Heart right ventricle (tissue), 16 donors: ENCODE measurements at regions of chr18 and their contacts with region 1.

Region 1: DNA sequence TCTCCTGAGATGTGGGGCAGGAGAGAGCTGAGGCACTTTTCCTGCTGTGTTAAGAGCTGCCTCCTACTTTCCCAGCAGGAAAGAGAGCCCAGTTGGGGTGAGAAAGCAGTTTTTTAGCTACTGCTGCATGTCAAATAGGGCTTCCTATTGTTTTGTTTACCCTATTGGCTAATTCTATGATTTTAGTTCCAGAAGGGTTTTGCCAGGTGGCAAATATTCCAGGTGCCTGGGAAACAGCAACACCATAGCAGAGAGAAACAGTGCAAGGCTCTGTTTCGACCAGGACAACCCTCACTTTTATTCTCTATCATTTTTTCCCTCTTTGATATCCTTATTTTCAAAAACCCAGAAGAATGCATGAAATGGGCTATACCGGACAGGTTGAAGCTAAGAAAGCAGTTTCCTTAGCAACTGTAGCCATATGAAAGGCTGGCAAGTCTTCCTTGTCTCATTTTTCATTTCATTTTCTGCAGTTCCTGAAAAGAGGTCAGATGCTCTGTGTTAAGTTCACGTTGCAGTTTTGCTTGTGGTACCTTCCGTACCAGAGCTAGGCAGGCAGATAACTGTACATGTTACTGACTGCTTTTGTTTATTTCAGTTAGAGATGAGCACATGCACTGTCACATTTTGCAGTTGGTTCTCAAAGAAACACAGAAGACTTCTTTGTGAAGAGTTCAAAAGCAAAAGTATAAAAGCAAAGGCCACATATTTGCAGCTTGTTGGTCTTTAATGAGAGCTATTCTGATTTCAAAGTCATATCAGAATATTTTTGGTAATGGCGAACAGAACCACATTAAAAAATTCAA is 84.8 kb downstream of the AQP4 start:
- DNase-seq: no peak
- ATAC-seq: no peak
- H3K4me3 ChIP-seq: no peak overlapping the region
- H3K27ac ChIP-seq: no peak overlapping the region
- H3K4me1 ChIP-seq: no peaks in the 10 kb centered on the region
- H3K27me3 ChIP-seq: peaks cover 0 to 37% (median 10%) of the 10 kb centered on the region in 7 donors
- CTCF ChIP-seq: no peak

Region 2: DNA sequence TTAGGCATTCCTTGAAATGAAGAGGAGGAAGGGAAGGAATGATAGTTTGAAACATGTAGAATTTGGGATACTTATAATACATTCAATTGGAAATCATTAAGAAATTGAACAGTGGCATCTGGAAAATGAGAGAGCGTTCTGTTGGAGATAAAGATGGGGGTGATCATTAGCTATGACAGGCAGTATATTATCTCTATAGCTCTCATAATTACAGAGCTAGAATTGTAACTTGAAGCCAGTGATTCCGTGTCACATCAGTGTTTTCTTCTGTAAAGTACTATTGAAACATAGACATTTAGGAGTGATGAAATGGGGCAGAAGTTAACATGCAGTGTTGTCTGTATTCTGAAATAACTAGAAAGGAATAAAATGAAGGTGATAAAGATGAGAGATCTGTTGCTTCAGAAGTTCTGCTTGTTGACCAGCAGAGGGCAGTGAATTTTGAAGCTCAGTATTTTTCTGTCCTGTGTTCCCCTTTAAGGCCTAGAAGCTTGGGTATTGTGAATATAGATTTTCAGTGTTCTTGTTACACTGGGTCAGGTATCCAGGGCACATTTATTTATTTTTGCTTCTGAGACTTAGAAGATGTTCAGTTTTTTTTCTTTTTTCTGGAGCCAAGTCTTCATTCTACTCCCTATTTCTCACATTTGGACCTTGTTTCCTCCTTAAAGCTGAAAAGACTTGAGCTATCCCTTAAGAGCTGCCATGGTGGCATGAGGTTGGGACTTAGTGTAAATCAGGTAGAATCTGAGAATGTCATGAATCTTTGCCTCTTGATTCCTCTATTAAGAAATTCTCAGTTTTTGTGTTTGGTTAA is 397.1 kb before region 1 on chr18:
- intact Hi-C with region 1: no loop called
- DNase-seq: no peak
- ATAC-seq: peak in 3 of 8 donors; percentile 47 to 56 (median 49)
- H3K4me3 ChIP-seq: no peak overlapping the region
- H3K27ac ChIP-seq: no peak overlapping the region
- H3K4me1 ChIP-seq: peaks cover 0 to 21% (median 10%) of the 10 kb centered on the region in 9 donors
- H3K27me3 ChIP-seq: no peaks in the 10 kb centered on the region
- CTCF ChIP-seq: peak; percentile 58 to 85 (median 77)

Region 3: GRCh38 chr18:26662996-26663395 is 117.7 kb before region 1 on chr18:
- intact Hi-C with region 1: no loop called
- DNase-seq: no peak
- ATAC-seq: no peak
- H3K4me3 ChIP-seq: no peak overlapping the region
- H3K27ac ChIP-seq: no peak overlapping the region
- H3K4me1 ChIP-seq: peaks cover 0 to 5% (median 3%) of the 10 kb centered on the region in 9 donors
- H3K27me3 ChIP-seq: peaks cover 0 to 51% (median 23%) of the 10 kb centered on the region in 7 donors
- CTCF ChIP-seq: no peak

Region 4: DNA sequence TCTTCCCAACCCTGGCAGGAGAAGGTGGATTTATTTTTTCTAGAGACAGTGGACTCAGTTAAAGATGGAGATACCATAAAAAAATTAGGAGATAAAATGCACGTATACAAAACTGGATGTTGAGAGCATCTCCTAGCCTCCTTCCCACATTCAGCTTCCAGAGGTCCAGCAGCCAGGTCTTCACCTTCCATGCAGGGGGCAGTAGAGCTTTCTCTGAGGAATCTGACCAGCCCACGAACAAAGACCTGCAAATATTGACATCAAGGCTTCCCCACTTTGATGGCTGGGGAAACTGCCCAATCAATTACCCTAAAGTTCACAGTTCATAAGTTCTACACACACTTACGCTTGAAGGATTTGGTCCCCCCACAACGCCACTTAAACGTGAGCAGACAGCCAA is 60.2 kb after region 1 on chr18:
- intact Hi-C with region 1: loop called in 1 of 10 experiments (anchors 10 kb)
- DNase-seq: no peak
- ATAC-seq: no peak
- H3K4me3 ChIP-seq: no peak overlapping the region
- H3K27ac ChIP-seq: no peak overlapping the region
- H3K4me1 ChIP-seq: no peaks in the 10 kb centered on the region
- H3K27me3 ChIP-seq: no peaks in the 10 kb centered on the region
- CTCF ChIP-seq: no peak

Region 5: GRCh38 chr18:27007880-27008279 is 227.2 kb after region 1 on chr18:
- intact Hi-C with region 1: no loop called
- DNase-seq: no peak
- ATAC-seq: no peak
- H3K4me3 ChIP-seq: no peak overlapping the region
- H3K27ac ChIP-seq: no peak overlapping the region
- H3K4me1 ChIP-seq: no peaks in the 10 kb centered on the region
- H3K27me3 ChIP-seq: peaks cover 0 to 8% (median 0%) of the 10 kb centered on the region in 7 donors
- CTCF ChIP-seq: no peak